ENCODE measurements at regions of chr7 and their contacts with region 1.

Region 1: GRCh38 chr7:112853422-112853821 is 63.2 kb upstream of the TMEM168 start:
- DNase-seq: no peak
- H3K4me3 ChIP-seq: no peak overlapping the region
- H3K27ac ChIP-seq: no peak overlapping the region
- H3K4me1 ChIP-seq: no peaks in the 10 kb centered on the region
- H3K27me3 ChIP-seq: no peaks in the 10 kb centered on the region
- CTCF ChIP-seq: no peak
- POLR2A ChIP-seq: no peak

Region 2: DNA sequence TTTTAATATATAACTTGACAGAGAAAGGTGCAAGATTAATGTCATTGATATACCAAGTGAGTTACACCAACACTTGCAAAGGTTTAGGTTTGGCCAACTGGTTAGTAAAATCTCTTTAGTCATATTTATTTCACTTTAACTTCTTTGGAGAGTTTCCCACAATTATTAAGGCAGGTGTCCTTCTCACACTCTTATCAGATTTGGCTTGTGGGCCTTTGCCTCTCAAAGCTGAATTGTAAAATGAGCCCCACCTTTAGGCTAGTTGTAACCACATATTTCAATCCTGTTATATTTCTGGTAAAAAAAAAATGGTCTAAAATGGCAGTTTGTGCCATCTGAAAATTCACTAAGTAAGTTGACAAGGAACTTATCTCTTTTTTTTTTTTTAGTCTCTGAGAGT is 1534.6 kb after region 1 on chr7:
- intact Hi-C with region 1: loop called (anchors 5 kb)
- DNase-seq: no peak
- H3K4me3 ChIP-seq: no peak overlapping the region
- H3K27ac ChIP-seq: no peak overlapping the region
- H3K4me1 ChIP-seq: no peaks in the 10 kb centered on the region
- H3K27me3 ChIP-seq: no peaks in the 10 kb centered on the region
- CTCF ChIP-seq: no peak
- POLR2A ChIP-seq: no peak